ENCODE measurements at regions of chr10 and their contacts with region 1.

Region 1: DNA sequence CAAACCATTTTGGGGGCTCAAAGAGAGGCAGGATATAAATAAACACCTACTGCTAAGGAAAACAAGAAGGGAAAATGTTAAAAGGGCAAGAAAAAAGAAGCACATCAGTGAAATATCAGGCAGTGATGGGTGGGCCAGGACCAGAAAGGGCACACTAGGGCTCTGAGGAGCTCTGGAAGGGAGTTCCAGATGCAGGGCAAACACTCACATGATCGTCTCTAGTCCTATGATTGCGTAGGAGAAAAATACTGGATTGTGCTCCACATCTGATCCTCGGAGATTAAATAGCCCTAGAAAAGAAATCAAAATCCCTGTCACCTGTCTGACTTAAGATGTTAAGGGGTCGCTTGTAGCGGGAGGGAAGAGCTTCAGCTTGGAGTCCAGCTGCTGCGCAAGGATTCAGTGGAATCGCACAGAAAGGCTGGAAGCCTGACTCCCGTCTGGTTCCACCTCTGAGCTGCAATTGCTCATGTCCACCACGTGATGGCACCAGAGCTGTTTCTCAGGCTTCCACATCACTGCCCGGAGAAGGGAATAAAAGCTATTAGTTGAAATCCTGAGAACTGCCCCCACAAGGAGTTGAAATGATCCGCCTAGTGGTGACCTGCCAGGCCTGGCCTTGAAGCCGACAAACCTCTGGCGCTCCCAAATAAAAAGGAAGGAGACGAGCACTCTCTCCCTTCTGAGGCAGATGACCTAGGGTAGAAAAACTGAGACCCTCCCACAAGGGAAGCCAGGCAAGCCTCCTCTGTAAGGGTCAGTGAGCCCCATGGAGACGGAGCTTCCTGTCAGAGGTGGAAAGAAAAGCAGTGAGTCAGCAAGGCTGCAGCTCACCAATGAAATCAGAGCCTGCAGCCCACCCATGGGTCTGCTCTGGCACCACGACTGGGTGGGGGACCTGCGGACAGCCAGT is 39.2 kb downstream of the XPNPEP1 start:
- DNase-seq: peak; percentile 81
- H3K4me3 ChIP-seq: no peak overlapping the region
- H3K27ac ChIP-seq: no peak overlapping the region
- H3K4me1 ChIP-seq: peaks cover 23% of the 10 kb centered on the region
- CTCF ChIP-seq: peak; percentile 98

Region 2: DNA sequence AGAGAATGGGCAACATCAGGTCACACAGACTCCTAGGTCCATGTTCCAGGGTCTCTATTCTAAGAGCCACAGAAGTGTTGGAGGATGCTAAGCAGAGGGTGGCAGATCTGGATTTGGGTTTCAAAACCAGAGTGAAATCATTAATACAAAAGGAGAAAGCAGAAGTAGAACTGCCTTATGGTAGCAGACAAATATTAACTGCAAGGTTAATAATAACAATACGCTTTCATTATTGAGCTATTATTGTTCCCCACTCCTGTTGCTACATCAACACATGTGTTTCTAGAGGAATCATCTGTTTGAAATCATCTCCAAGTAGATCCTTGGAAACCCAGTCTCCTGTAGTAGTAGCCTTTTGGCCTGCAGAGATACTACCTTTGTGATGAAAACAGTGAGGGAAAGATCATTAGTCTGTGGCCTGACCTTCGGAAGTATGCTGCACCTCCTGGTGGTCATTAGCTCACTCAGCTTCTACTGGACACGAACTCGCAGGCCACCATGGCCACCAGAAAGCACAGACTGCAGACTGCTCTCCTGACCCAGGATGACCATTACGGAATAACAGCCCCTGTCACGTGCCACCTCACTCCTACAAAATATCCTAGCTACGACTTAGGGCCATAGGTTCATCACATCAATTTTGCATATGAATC is 45.4 kb before region 1 on chr10:
- CTCF ChIA-PET with region 1: no interaction called
- POLR2A ChIA-PET with region 1: no interaction called
- intact Hi-C with region 1: no loop called
- DNase-seq: no peak
- H3K4me3 ChIP-seq: no peak overlapping the region
- H3K27ac ChIP-seq: no peak overlapping the region
- H3K4me1 ChIP-seq: no peaks in the 10 kb centered on the region
- CTCF ChIP-seq: no peak

Region 3: GRCh38 chr10:109922976-109923921 is 39.1 kb after region 1 on chr10 and contains the start of gene XPNPEP1:
- CTCF ChIA-PET with region 1: no interaction called
- POLR2A ChIA-PET with region 1: no interaction called
- intact Hi-C with region 1: loop called (anchors 2 kb)
- DNase-seq: peak; percentile 89
- H3K4me3 ChIP-seq: peak within 1 kb of the TSS; percentile 80
- H3K27ac ChIP-seq: peak within 1 kb of the TSS; percentile 48
- H3K4me1 ChIP-seq: peaks cover 44% of the 10 kb centered on the region
- CTCF ChIP-seq: no peak
- total RNA-seq, gene XPNPEP1: 234 and 237 TPM in 2 replicates

Region 4: DNA sequence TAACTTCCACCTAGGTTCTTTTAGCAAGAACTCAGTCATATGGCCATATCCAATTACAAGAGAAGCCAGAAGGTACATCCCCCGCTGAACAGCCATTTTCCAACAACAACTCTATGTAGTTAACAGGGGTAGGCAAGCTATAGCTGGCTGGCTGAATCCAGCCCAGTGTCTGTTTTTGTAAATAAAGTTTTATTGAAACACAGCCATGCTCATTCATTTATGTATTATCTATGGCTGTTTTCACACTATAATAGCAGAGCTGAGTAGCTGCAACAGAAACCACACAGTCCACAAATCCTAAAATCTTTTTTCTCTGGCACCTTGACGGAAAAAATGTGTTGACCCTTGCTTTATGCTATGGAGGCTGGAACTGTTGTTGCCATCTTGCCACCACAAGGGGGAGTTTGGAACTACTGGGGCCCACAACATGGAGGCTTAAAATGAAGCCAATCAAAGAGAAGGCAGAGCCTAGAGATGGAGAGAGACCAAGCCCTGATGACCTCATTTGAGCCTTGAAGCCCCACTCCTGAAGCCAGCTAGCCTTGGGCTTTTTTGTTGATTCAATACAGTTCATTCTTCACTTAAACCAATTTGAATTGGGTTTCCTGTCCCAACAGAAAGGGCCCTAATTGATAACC is 72.5 kb after region 1 on chr10:
- CTCF ChIA-PET with region 1: no interaction called
- POLR2A ChIA-PET with region 1: no interaction called
- intact Hi-C with region 1: loop called (anchors 1 kb)
- DNase-seq: peak; percentile 69
- H3K4me3 ChIP-seq: no peak overlapping the region
- H3K27ac ChIP-seq: no peak overlapping the region
- H3K4me1 ChIP-seq: peaks cover 9% of the 10 kb centered on the region
- CTCF ChIP-seq: peak; percentile 93

Region 5: DNA sequence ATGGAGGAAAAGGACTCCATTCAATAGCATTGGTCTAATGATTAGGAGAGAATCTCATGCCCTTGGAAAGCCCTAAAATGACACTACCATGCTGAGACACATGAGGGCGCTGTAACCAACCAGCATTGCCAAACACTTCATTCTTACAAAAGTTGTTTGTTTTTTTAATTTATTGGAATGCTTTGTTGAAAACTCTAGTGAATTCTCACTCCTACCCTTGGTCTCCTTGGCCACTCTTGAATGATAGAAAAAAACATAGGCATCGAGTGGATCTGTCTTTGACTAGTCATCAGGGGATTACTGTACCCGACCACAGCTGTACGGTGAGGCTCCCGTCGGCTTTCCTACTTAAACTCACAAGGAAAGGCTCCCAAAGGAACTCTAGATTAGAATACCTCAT is 94.4 kb after region 1 on chr10:
- CTCF ChIA-PET with region 1: no interaction called
- POLR2A ChIA-PET with region 1: interaction called, 3 read pairs
- intact Hi-C with region 1: loop called (anchors 2 kb)
- DNase-seq: peak; percentile 41
- H3K4me3 ChIP-seq: no peak overlapping the region
- H3K27ac ChIP-seq: no peak overlapping the region
- H3K4me1 ChIP-seq: no peaks in the 10 kb centered on the region
- CTCF ChIP-seq: peak; percentile 95

Region 6: DNA sequence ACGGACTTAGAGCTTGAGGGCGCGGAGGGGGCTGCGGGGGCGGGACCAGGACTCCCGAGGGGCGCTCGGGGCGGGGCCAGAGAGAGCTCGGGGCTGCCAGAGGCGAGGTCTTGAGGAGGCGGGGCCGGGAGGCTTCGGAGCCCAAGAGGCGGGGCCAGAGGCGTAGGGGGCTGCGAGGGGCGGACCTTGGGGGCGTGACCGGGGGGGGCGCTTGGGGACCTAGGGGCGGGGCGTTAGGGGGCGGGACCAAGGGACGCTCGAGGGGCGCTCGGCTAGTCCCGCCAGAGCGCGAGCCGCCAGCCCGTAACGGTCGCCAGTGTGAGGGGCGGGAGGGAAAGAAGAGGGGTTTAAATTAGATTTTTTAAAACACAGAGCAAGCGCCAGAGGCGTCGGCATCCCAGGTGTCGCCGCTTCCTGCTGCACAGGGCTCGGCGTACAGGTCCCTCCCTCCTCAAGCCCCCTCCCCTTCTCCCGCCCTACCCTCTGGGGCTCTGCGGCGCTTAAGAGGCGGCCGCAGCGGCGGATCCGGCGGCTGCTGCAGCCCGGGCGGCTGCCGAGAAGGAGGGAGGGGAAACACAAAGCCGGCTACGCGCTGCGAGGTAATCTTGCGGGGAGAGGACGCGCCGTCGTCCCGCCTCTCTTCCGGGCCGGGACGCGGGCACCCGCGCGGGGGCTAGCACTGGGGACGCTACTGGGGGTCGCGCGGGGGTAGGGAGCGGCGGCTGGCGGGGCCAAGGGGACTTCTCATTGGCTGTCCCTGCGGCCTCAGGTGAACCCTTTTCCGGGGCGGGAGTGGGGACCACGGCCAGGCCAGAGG is 123.8 kb after region 1 on chr10 and contains the start of gene ADD3:
- CTCF ChIA-PET with region 1: interaction called, 3 read pairs
- POLR2A ChIA-PET with region 1: interaction called, 4 read pairs
- intact Hi-C with region 1: loop called (anchors 2 kb)
- DNase-seq: peak; percentile 97
- H3K4me3 ChIP-seq: peak within 1 kb of the TSS; percentile 96
- H3K27ac ChIP-seq: peak within 1 kb of the TSS; percentile 84
- H3K4me1 ChIP-seq: peaks cover 62% of the 10 kb centered on the region
- CTCF ChIP-seq: no peak
- total RNA-seq, gene ADD3: 53.3 and 75.8 TPM in 2 replicates

Region 7: GRCh38 chr10:110137142-110137545 is 253.0 kb after region 1 on chr10:
- CTCF ChIA-PET with region 1: no interaction called
- POLR2A ChIA-PET with region 1: no interaction called
- intact Hi-C with region 1: loop called (anchors 1 kb)
- DNase-seq: peak; percentile 83
- H3K4me3 ChIP-seq: no peak overlapping the region
- H3K27ac ChIP-seq: no peak overlapping the region
- H3K4me1 ChIP-seq: peaks cover 23% of the 10 kb centered on the region
- CTCF ChIP-seq: peak; percentile 98

Region 8: GRCh38 chr10:110168601-110169481 is 284.7 kb after region 1 on chr10:
- CTCF ChIA-PET with region 1: no interaction called
- POLR2A ChIA-PET with region 1: no interaction called
- intact Hi-C with region 1: no loop called
- DNase-seq: no peak
- H3K4me3 ChIP-seq: no peak overlapping the region
- H3K27ac ChIP-seq: no peak overlapping the region
- H3K4me1 ChIP-seq: no peaks in the 10 kb centered on the region
- CTCF ChIP-seq: no peak

Region 9: DNA sequence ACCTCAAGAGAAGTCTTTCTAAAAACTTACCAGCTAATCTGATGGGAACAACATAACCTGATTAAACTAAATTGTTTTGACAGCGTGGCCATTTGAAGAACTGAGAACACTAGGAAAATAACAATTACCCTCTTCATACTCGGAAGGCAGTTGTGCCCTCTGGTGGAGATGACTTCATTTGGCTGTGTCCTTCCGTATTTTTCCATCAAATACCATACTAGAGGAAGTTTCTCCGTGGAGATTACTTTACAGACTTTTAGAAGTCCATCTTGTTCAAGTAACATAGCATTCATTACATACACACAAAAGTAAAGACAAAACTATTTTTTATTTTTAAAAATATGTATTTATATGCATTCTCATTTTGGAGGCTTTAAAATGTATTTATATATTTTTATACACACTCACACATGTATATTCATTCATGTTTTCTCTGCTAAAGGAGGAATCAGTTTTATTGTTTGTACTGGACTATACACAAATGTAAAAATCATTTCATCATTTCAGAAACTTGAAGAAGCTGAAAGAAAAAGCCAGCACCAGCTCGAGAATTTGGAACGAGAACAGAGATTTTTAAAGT is 395.4 kb after region 1 on chr10:
- CTCF ChIA-PET with region 1: no interaction called
- POLR2A ChIA-PET with region 1: no interaction called
- intact Hi-C with region 1: loop called (anchors 1 kb)
- DNase-seq: peak; percentile 73
- H3K4me3 ChIP-seq: peak overlapping the region; percentile 7
- H3K27ac ChIP-seq: no peak overlapping the region
- H3K4me1 ChIP-seq: peaks cover 21% of the 10 kb centered on the region
- CTCF ChIP-seq: peak; percentile 98